ENCODE measurements at regions of chr2 and their contacts with region 1.

Region 1: DNA sequence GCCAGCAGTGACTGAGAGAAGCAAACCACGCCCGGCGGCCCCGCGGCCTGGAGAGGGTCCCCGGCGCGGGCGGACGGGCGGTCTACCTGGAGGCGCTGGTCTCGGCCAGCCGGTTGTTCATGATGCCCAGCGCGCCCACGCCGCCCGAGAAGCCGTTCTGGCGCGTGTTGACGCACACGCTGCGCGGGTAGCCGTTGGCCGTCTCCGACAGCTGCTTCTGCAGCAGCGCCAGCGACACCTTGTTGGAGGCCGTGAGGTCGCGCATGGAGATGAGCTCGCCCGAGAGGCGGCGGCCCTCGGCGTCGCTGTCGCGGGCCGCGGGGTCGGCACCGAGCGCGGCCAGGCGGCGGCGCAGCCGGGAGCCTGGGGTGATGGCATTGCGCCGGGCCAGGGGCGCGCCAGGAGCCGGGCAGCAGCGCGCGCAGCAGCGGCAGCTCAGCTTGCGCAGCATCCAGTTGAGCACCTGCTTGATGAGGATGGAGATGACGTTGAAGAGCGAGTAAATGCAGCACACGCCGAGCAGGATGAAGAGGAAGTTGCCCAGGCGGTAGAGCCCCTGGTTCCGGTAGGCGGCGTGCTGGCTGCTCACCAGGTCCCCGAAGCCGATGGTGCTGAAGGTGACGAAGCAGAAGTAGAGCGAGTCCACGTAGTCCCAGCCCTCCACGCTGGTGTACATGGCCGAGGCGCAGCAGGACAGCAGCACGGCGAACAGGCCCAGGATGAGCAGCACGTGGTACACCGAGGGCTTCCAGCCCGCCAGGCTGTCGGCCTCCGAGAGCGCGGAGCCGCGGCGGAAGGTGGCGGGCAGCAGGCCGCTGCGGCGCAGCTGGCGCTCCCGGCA is 118.1 kb downstream of the MSH2 start:
- DNase-seq: peak; percentile 72 to 80 (median 78)
- H3K4me3 ChIP-seq: peak overlapping the region; percentile 23 to 81
- H3K4me3 Mint-ChIP-seq: peak overlapping the region; percentile 92 to 96 (median 94)
- H3K27ac ChIP-seq: peak overlapping the region; percentile 23
- H3K27ac Mint-ChIP-seq: peak overlapping the region; percentile 59 to 97 (median 93)
- H3K4me1 ChIP-seq: peaks cover 18% of the 10 kb centered on the region
- H3K4me1 Mint-ChIP-seq: peaks cover 10 to 31% (median 18%) of the 10 kb centered on the region in 4 donors
- H3K27me3 ChIP-seq: no peaks in the 10 kb centered on the region
- H3K27me3 Mint-ChIP-seq: peaks cover 0 to 1% of the 10 kb centered on the region in 2 donors

Region 2: GRCh38 chr2:47402805-47403608 is 118.0 kb before region 1 on chr2 and contains the start of gene MSH2:
- CTCF ChIA-PET with region 1: interaction called, 4 read pairs
- POLR2A ChIA-PET with region 1: interaction called, 5 read pairs
- intact Hi-C with region 1: loop called (anchors 2 kb)
- DNase-seq: peak; percentile 89 to 91 (median 90)
- H3K4me3 ChIP-seq: peak within 1 kb of the TSS; percentile 71 to 80
- H3K4me3 Mint-ChIP-seq: peak within 1 kb of the TSS; percentile 97 to 99 (median 98)
- H3K27ac ChIP-seq: peak within 1 kb of the TSS; percentile 66
- H3K27ac Mint-ChIP-seq: peak within 1 kb of the TSS; percentile 83 to 96 (median 94)
- H3K4me1 ChIP-seq: peaks cover 27% of the 10 kb centered on the region
- H3K4me1 Mint-ChIP-seq: peaks cover 27 to 47% (median 35%) of the 10 kb centered on the region in 4 donors
- H3K27me3 ChIP-seq: no peaks in the 10 kb centered on the region
- H3K27me3 Mint-ChIP-seq: no peaks in the 10 kb centered on the region
- total RNA-seq, gene MSH2: 26.2 to 26.4 TPM

Region 3: DNA sequence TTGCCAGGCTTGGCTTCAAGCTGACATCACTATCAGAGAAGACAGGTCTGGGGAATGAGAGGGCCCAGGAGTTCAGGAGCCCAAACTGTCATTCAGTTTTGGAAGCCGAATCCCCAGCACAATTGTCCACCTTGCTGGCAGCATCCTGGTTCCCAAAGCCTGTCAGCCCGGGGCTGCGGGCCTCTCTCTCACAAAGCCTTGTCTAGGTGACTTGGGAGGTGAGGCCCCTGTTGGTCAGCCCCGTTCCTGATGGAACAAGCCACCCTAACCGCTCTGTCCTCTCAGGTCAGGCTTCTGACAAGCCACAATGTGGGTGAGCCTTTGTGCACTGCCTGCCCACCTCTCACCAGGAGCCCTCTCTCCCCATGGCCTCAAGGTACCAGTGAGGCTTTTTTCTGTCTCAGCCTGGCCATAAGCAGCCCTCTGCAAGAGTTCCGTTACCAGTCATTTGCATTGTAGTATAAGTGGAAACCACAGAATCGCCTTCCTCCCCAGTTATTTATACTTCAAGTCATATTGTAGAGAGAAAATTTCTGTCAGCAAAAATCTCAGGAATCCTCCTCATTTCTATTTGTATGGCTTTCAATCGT is 17.5 kb before region 1 on chr2:
- CTCF ChIA-PET with region 1: no interaction called
- POLR2A ChIA-PET with region 1: no interaction called
- intact Hi-C with region 1: no loop called
- DNase-seq: no peak
- H3K4me3 ChIP-seq: no peak overlapping the region
- H3K4me3 Mint-ChIP-seq: no peak overlapping the region
- H3K27ac ChIP-seq: no peak overlapping the region
- H3K27ac Mint-ChIP-seq: no peak overlapping the region
- H3K4me1 ChIP-seq: no peaks in the 10 kb centered on the region
- H3K4me1 Mint-ChIP-seq: peaks cover 0 to 3% (median 0%) of the 10 kb centered on the region in 4 donors
- H3K27me3 ChIP-seq: no peaks in the 10 kb centered on the region
- H3K27me3 Mint-ChIP-seq: peaks cover 0 to 3% of the 10 kb centered on the region in 2 donors

Region 4: DNA sequence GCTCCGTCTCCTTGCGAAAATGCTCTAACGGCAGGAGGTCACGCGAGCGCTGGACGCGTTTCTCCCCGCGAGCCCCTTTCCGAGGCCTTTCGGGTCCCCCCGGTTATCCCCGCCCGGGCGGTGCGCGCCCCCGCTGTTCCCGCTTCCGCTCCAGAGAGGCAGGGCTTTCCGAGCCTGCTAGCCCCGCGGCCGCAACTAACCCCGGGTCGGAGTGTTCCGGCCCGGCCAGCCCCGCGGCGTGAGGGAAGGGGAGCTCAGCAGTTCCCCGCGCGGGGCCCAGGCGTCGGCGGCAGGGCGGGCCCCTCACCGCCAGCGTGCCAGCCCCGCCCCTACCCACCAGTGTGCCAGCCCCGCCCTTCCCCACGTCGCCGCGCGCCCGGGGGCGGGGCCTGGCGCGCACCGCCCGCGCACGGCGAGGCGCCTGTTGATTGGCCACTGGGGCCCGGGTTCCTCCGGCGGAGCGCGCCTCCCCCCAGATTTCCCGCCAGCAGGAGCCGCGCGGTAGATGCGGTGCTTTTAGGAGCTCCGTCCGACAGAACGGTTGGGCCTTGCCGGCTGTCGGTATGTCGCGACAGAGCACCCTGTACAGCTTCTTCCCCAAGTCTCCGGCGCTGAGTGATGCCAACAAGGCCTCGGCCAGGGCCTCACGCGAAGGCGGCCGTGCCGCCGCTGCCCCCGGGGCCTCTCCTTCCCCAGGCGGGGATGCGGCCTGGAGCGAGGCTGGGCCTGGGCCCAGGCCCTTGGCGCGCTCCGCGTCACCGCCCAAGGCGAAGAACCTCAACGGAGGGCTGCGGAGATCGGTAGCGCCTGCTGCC is 261.8 kb after region 1 on chr2 and contains the start of gene MSH6:
- CTCF ChIA-PET with region 1: no interaction called
- POLR2A ChIA-PET with region 1: interaction called, 6 read pairs
- intact Hi-C with region 1: loop called (anchors 5 kb)
- DNase-seq: peak; percentile 87 to 93 (median 92)
- H3K4me3 ChIP-seq: peak within 1 kb of the TSS; percentile 78 to 99
- H3K4me3 Mint-ChIP-seq: peak within 1 kb of the TSS; percentile 90 to 94 (median 92)
- H3K27ac ChIP-seq: peak within 1 kb of the TSS; percentile 94
- H3K27ac Mint-ChIP-seq: peak within 1 kb of the TSS; percentile 84 to 94 (median 92)
- H3K4me1 ChIP-seq: peaks cover 36% of the 10 kb centered on the region
- H3K4me1 Mint-ChIP-seq: peaks cover 13 to 33% (median 23%) of the 10 kb centered on the region in 4 donors
- H3K27me3 ChIP-seq: no peaks in the 10 kb centered on the region
- H3K27me3 Mint-ChIP-seq: no peaks in the 10 kb centered on the region
- total RNA-seq, gene MSH6: 39.4 to 49.9 TPM

Region 5: GRCh38 chr2:48089644-48090043 is 568.6 kb after region 1 on chr2:
- CTCF ChIA-PET with region 1: no interaction called
- POLR2A ChIA-PET with region 1: no interaction called
- intact Hi-C with region 1: no loop called
- DNase-seq: no peak
- H3K4me3 ChIP-seq: no peak overlapping the region
- H3K4me3 Mint-ChIP-seq: no peak overlapping the region
- H3K27ac ChIP-seq: no peak overlapping the region
- H3K27ac Mint-ChIP-seq: no peak overlapping the region
- H3K4me1 ChIP-seq: no peaks in the 10 kb centered on the region
- H3K4me1 Mint-ChIP-seq: no peaks in the 10 kb centered on the region
- H3K27me3 ChIP-seq: no peaks in the 10 kb centered on the region
- H3K27me3 Mint-ChIP-seq: no peaks in the 10 kb centered on the region

Region 6: DNA sequence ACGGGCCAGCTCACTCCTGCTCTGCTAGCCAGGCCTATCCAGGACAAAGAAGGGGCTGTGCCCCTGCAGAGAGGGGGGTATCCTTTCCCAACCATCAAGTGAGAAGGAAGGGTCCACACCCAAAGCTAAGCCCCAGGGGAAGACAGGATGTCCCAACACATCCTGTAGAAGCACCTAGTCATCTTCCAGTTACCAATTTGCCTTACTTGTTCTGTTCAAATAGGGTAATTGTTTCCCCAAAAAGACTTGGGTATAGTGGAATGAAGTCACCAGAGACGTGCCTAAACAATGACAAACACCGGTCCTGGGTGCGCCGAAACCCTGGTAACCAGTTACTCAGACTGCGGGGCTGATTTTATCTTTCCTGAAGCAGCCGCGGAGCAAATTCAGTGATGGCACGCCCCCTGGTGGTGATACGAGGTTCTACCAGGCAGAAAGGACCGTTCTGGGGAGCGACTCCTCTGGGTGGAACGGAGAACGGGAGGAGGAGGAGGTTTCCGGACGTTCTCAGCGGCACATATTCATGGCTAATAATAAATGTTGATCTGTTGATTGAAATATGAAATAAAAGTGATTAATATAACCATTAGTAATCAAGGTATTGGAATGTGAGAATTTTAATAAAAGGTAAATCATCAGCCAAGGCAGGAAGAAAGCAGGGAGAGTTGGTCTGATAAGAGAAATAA is 899.6 kb after region 1 on chr2:
- CTCF ChIA-PET with region 1: no interaction called
- POLR2A ChIA-PET with region 1: no interaction called
- intact Hi-C with region 1: loop called (anchors 10 kb)
- DNase-seq: peak; percentile 86 to 93 (median 88)
- H3K4me3 ChIP-seq: no peak overlapping the region
- H3K4me3 Mint-ChIP-seq: peak overlapping the region in 6 of 8 donors; percentile 53 to 74 (median 62)
- H3K27ac ChIP-seq: no peak overlapping the region
- H3K27ac Mint-ChIP-seq: peak overlapping the region; percentile 63 to 90 (median 86)
- H3K4me1 ChIP-seq: peaks cover 20% of the 10 kb centered on the region
- H3K4me1 Mint-ChIP-seq: peaks cover 19 to 31% (median 20%) of the 10 kb centered on the region in 4 donors
- H3K27me3 ChIP-seq: no peaks in the 10 kb centered on the region
- H3K27me3 Mint-ChIP-seq: peaks cover 2% of the 10 kb centered on the region in 2 donors